ENCODE measurements at regions of chrX and their contacts with region 1.

Region 1: DNA sequence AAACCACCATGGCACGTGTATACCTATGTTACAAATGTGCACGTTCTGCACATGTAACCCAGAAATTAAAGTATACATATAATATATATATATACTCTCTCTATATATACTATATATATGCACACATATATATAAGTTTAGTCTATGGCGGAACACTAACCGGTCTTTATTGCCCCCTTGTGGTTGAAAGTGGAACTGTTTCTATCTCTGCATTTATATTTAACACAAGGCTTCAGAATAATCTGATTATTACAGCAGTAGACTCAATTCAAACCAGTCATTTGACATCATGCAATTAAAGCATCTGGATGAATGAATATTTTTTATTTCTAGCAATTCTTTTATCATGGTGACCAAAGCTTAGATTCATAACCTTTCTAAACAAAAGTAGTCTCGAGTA is 14.6 kb downstream of the RAB9B start:
- DNase-seq: no peak
- H3K4me3 Mint-ChIP-seq: no peak overlapping the region
- H3K27ac Mint-ChIP-seq: no peak overlapping the region
- H3K4me1 Mint-ChIP-seq: peaks cover 4% of the 10 kb centered on the region
- H3K27me3 Mint-ChIP-seq: peaks cover 10% of the 10 kb centered on the region

Region 2: GRCh38 chrX:103533511-103534216 is 283.8 kb before region 1 on chrX:
- CTCF ChIA-PET with region 1: interaction called, 3 read pairs
- POLR2A ChIA-PET with region 1: no interaction called
- intact Hi-C with region 1: loop called (anchors 1 kb)
- DNase-seq: peak; percentile 76
- H3K4me3 Mint-ChIP-seq: no peak overlapping the region
- H3K27ac Mint-ChIP-seq: no peak overlapping the region
- H3K4me1 Mint-ChIP-seq: peaks cover 3% of the 10 kb centered on the region
- H3K27me3 Mint-ChIP-seq: no peaks in the 10 kb centered on the region

Region 3: GRCh38 chrX:103711533-103712369 is 105.8 kb before region 1 on chrX:
- CTCF ChIA-PET with region 1: interaction called, 18 read pairs
- POLR2A ChIA-PET with region 1: no interaction called
- intact Hi-C with region 1: loop called (anchors 1 kb)
- DNase-seq: peak; percentile 51
- H3K4me3 Mint-ChIP-seq: no peak overlapping the region
- H3K27ac Mint-ChIP-seq: no peak overlapping the region
- H3K4me1 Mint-ChIP-seq: no peaks in the 10 kb centered on the region
- H3K27me3 Mint-ChIP-seq: no peaks in the 10 kb centered on the region

Region 4: GRCh38 chrX:103831803-103832544 is 14.5 kb after region 1 on chrX and contains the start of gene RAB9B:
- CTCF ChIA-PET with region 1: interaction called, 10 read pairs
- POLR2A ChIA-PET with region 1: no interaction called
- intact Hi-C with region 1: no loop called
- DNase-seq: peak; percentile 75
- H3K4me3 Mint-ChIP-seq: peak within 1 kb of the TSS; percentile 70
- H3K27ac Mint-ChIP-seq: no peak within 1 kb of the TSS
- H3K4me1 Mint-ChIP-seq: peaks cover 3% of the 10 kb centered on the region
- H3K27me3 Mint-ChIP-seq: peaks cover 4% of the 10 kb centered on the region
- total RNA-seq, gene RAB9B: 0.44 to 0.57 TPM

Measured in activated CD4-positive, alpha-beta memory T cell treated with anti-CD3 and anti-CD28 coated beads for 36 hours (primary cell).